ENCODE measurements at regions of chr5 and their contacts with region 1.

Region 1: DNA sequence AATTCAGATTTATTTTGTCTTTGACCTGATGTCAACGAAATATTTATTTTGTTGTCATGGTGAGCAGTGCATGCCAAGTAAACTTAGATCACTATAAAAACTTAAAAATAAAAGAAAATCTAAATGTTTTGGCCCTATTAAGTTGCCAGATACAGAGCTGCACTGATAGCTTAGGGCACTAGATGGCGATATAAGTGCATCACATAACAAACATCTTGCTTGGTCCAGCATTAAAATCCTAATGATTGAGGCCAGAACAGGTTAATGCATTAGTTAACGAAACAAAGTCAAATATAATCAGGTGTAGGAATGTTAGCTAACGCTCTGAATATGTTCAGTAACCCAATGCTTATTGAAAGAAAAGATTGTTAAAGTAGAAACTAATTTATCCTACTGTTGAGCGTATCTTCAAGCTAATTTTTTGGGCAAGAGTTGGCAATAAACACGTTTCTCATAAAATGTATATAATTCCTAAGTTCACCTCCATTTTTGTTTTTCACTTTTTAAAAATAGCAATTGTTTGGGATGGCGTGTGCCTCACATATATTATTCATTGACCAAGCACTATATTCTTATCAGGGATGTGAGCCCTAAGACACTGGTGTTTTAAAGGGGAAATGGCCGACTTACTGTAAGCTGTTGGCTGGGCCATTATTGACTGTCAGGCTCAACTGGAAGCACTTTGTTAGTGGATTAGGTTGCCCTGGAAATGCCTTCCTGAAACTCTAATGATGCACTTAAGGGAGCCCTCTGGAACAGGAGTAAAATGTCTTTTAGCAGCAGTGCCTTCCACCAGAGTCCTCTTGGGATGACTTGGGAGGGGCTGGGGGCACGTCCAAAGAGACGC is 33.3 kb downstream of the KCTD16 start:
- DNase-seq: peak; percentile 56
- H3K4me3 Mint-ChIP-seq: peak overlapping the region; percentile 38
- H3K27ac Mint-ChIP-seq: no peak overlapping the region
- H3K4me1 Mint-ChIP-seq: no peaks in the 10 kb centered on the region
- H3K27me3 Mint-ChIP-seq: peaks cover 84% of the 10 kb centered on the region
- CTCF ChIP-seq: peak; percentile 77

Region 2: DNA sequence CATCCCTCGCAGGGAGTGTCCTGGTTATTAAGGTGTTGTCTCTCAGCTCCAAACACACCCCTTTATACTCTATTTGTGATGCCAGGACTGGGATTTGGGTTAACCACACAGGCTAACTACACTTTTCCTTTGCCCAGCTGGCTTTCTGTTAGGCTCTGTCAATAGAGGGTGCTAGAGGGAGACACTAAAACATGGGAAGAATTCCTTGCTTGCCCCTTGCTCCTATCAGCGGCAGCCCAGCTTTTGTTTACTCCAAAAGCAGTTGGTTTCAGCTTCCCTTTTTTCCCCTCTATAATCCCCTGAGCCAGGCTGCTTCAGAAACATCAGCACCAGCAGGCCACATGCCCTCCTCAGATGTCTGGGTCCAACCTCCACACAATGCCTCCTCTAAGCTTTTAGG is 263.8 kb after region 1 on chr5:
- CTCF ChIA-PET with region 1: interaction called, 5 read pairs
- intact Hi-C with region 1: loop called (anchors 5 kb)
- DNase-seq: peak; percentile 44
- H3K4me3 Mint-ChIP-seq: no peak overlapping the region
- H3K27ac Mint-ChIP-seq: no peak overlapping the region
- H3K4me1 Mint-ChIP-seq: peaks cover 9% of the 10 kb centered on the region
- H3K27me3 Mint-ChIP-seq: peaks cover 17% of the 10 kb centered on the region
- CTCF ChIP-seq: no peak

Region 3: GRCh38 chr5:145237843-145238242 is 1033.9 kb after region 1 on chr5:
- CTCF ChIA-PET with region 1: interaction called, 4 read pairs
- intact Hi-C with region 1: loop called (anchors 1 kb)
- DNase-seq: peak; percentile 75
- H3K4me3 Mint-ChIP-seq: no peak overlapping the region
- H3K27ac Mint-ChIP-seq: no peak overlapping the region
- H3K4me1 Mint-ChIP-seq: peaks cover 20% of the 10 kb centered on the region
- H3K27me3 Mint-ChIP-seq: no peaks in the 10 kb centered on the region
- CTCF ChIP-seq: peak; percentile 71

Region 4: GRCh38 chr5:145463635-145464034 is 1259.7 kb after region 1 on chr5:
- CTCF ChIA-PET with region 1: no interaction called
- intact Hi-C with region 1: loop called (anchors 10 kb)
- DNase-seq: no peak
- H3K4me3 Mint-ChIP-seq: no peak overlapping the region
- H3K27ac Mint-ChIP-seq: peak overlapping the region; percentile 79
- H3K4me1 Mint-ChIP-seq: peaks cover 43% of the 10 kb centered on the region
- H3K27me3 Mint-ChIP-seq: no peaks in the 10 kb centered on the region
- CTCF ChIP-seq: no peak

Region 5: GRCh38 chr5:145825751-145826180 is 1621.8 kb after region 1 on chr5:
- CTCF ChIA-PET with region 1: no interaction called
- intact Hi-C with region 1: loop called (anchors 2 kb)
- DNase-seq: peak; percentile 31
- H3K4me3 Mint-ChIP-seq: no peak overlapping the region
- H3K27ac Mint-ChIP-seq: no peak overlapping the region
- H3K4me1 Mint-ChIP-seq: peaks cover 17% of the 10 kb centered on the region
- H3K27me3 Mint-ChIP-seq: no peaks in the 10 kb centered on the region
- CTCF ChIP-seq: peak; percentile 89

Region 6: DNA sequence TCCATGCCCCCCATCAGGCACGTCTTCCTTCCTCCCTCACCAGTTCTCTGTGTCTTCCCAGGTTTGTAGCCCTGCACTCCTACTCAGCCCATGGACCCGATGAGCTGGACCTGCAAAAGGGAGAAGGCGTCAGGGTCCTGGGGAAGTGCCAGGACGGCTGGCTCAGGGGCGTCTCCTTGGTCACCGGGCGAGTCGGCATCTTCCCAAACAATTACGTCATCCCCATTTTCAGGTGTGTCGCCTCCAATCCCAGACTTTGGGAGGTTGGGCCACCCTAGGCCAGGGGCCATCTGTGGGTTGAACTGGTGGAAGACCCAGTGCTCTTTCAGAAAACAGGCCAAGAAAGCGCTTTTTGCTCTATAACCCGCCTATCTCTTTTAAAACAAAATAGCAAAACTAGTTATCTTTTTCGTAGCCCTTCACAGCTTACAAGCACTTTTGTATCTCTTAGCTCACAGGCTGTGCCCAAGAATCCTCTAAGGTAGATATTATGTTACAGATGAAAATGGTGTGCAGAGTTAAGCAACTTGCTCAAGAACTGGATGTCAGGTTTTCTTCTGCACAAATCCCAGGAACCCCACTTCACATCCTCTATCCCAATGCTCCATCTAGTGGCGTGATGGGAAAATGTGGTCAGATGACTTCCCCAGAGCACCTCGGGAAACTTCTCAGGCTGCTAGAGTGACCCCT is 1845.2 kb after region 1 on chr5:
- CTCF ChIA-PET with region 1: no interaction called
- intact Hi-C with region 1: loop called (anchors 5 kb)
- DNase-seq: peak; percentile 78
- H3K4me3 Mint-ChIP-seq: no peak overlapping the region
- H3K27ac Mint-ChIP-seq: peak overlapping the region; percentile 22
- H3K4me1 Mint-ChIP-seq: peaks cover 35% of the 10 kb centered on the region
- H3K27me3 Mint-ChIP-seq: no peaks in the 10 kb centered on the region
- CTCF ChIP-seq: peak; percentile 86